Activated naive CD4-positive, alpha-beta T cell treated with anti-CD3 and anti-CD28 coated beads for 36 hours (primary cell): ENCODE measurements at regions of chr2 and their contacts with region 1.

Region 1: GRCh38 chr2:84539729-84540128 is 23.4 kb downstream of the DNAH6 start:
- DNase-seq: no peak
- H3K4me3 Mint-ChIP-seq: no peak overlapping the region
- H3K27ac Mint-ChIP-seq: no peak overlapping the region
- H3K4me1 Mint-ChIP-seq: peaks cover 7% of the 10 kb centered on the region
- H3K27me3 Mint-ChIP-seq: no peaks in the 10 kb centered on the region

Region 2: DNA sequence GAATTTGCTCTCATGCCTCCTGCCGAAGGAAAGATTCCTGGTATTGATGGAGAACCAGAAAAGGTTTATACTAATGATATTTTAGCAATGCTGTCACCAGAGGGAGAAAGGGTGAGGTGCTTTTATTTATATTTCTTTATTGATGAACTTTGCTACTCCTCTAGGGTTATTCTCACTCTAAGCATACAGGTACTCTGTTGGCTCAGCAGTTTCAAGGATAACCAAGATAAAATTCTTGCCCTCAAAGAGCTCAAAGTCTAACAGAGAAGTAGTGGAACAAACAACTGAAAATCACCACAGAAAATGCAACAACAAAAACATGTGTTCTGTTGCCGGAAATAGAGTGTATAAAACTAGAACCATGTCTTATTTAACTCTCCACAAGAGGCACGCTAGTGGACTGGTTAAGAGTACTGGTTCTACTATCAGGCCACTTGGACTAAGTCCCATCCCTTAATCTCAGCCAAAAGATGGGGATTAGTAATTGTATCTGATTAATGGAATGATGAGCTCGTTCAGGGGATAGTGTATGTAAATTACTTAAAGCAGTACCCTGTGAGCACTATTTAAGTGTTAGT is 80.2 kb after region 1 on chr2:
- CTCF ChIA-PET with region 1: no interaction called
- intact Hi-C with region 1: loop called (anchors 5 kb)
- DNase-seq: no peak
- H3K4me3 Mint-ChIP-seq: no peak overlapping the region
- H3K27ac Mint-ChIP-seq: no peak overlapping the region
- H3K4me1 Mint-ChIP-seq: peaks cover 3% of the 10 kb centered on the region
- H3K27me3 Mint-ChIP-seq: no peaks in the 10 kb centered on the region

Region 3: GRCh38 chr2:84729224-84729623 is 189.5 kb after region 1 on chr2:
- CTCF ChIA-PET with region 1: no interaction called
- intact Hi-C with region 1: no loop called
- DNase-seq: no peak
- H3K4me3 Mint-ChIP-seq: no peak overlapping the region
- H3K27ac Mint-ChIP-seq: no peak overlapping the region
- H3K4me1 Mint-ChIP-seq: peaks cover 57% of the 10 kb centered on the region
- H3K27me3 Mint-ChIP-seq: no peaks in the 10 kb centered on the region